Esophagus muscularis mucosa (tissue), 4 donors: ENCODE measurements at regions of chr4 and their contacts with region 1.

Region 1: DNA sequence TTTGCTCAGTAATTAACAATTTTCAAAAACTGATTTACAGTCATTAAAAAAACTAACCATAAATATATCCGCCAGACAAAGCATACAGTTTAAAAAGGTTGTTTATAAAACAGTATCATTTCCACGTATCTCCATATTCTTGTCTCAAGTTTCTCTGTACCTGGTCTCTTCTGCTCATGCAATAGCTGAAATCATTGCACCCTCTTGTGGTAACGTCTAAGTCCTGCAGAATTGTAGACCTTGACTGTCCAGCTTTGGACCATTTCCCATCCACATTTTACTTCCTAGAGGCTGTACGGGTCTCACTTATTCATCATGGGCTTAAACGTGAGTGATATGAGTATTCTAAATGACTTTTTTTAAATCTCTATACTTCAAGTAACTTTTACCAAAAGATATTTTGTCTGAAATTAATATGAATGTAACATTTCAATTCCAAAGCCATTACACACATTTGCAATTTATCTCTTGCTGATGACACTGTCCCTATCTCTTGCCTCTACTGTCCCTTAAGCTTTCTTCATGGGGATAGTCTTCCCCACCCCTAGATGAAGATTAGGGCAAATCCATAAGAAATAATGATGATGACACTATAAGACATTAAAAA is 118.5 kb downstream of the BTC start:
- DNase-seq: no peak
- H3K4me3 ChIP-seq: no peak overlapping the region
- H3K27ac ChIP-seq: no peak overlapping the region
- H3K4me1 ChIP-seq: peaks cover 0 to 7% (median 0%) of the 10 kb centered on the region in 4 donors
- H3K27me3 ChIP-seq: no peaks in the 10 kb centered on the region
- CTCF ChIP-seq: peak; percentile 72 to 84 (median 76)
- EP300 ChIP-seq: no peak
- POLR2A ChIP-seq: no peak

Region 2: GRCh38 chr4:74320559-74321118 is 355.1 kb before region 1 on chr4:
- intact Hi-C with region 1: loop called (anchors 2 kb)
- DNase-seq: no peak
- H3K4me3 ChIP-seq: no peak overlapping the region
- H3K27ac ChIP-seq: no peak overlapping the region
- H3K4me1 ChIP-seq: peaks cover 0 to 8% (median 4%) of the 10 kb centered on the region in 4 donors
- H3K27me3 ChIP-seq: no peaks in the 10 kb centered on the region
- CTCF ChIP-seq: peak; percentile 45 to 54 (median 46)
- EP300 ChIP-seq: no peak
- POLR2A ChIP-seq: no peak

Region 3: DNA sequence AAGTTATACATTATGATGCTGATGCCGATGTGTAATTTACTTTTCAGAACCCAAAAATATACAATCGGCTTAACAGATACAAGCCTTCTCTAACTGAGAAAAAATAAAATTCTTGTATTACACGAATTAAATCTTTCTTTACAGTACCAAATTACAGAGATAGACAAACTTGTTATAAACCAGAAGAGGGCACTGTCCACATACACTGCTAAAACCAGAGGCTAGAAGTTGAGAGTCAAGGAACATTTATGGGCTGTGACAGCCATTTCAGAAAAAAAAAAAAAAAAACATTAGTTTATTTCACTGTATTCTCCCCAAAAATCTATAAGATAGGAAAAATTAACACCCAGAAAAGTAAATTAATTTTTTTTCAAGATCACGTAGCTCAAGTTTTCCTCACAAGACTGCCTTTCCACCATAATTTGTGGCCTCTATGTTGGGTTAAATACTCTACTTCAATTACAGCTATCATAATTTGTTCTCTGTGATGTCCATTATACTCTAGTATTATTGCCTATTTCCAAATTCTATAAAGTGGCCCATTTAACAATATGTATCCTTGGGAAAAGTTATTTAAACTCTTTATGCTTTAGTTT is 298.8 kb before region 1 on chr4:
- intact Hi-C with region 1: loop called (anchors 2 kb)
- DNase-seq: no peak
- H3K4me3 ChIP-seq: no peak overlapping the region
- H3K27ac ChIP-seq: peak overlapping the region in 2 of 4 donors; percentile 38 to 41
- H3K4me1 ChIP-seq: peaks cover 0 to 32% (median 11%) of the 10 kb centered on the region in 4 donors
- H3K27me3 ChIP-seq: no peaks in the 10 kb centered on the region
- CTCF ChIP-seq: peak; percentile 55 to 62 (median 59)
- EP300 ChIP-seq: no peak
- POLR2A ChIP-seq: no peak

Region 4: DNA sequence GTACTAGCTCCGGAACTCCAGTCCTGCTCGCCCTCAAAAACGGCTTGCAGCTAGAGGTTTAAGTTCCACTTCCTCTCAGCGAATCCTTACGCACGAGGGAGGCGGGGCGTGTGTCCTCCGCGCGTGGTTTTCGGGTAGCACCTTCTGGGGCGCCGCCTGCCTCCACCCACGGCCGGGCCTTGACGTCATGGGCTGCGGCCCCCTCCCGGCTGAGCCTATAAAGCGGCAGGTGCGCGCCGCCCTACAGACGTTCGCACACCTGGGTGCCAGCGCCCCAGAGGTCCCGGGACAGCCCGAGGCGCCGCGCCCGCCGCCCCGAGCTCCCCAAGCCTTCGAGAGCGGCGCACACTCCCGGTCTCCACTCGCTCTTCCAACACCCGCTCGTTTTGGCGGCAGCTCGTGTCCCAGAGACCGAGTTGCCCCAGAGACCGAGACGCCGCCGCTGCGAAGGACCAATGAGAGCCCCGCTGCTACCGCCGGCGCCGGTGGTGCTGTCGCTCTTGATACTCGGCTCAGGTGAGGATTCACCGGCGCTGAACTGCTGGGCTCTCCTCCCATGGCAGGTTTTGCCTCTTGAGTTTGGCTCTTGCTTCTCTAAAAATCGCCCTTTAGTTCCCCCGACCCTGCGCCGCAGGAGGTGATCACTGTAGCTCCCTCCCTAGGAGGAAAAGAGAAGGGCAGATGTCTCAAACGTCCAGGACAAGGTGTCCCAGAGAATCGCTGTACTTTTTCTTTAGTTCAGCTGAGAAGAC is 230.7 kb before region 1 on chr4 and contains the start of gene AREG:
- intact Hi-C with region 1: loop called (anchors 5 kb)
- DNase-seq: peak; percentile 94
- H3K4me3 ChIP-seq: peak within 1 kb of the TSS; percentile 66 to 71 (median 70)
- H3K27ac ChIP-seq: peak within 1 kb of the TSS; percentile 85 to 89 (median 88)
- H3K4me1 ChIP-seq: peaks cover 0 to 20% (median 10%) of the 10 kb centered on the region in 4 donors
- H3K27me3 ChIP-seq: no peaks in the 10 kb centered on the region
- CTCF ChIP-seq: peak; percentile 53 to 65 (median 55)
- EP300 ChIP-seq: peak; percentile 67
- POLR2A ChIP-seq: no peak
- total RNA-seq, gene AREG: 1.4 to 18.6 (median 4.4) TPM

Region 5: GRCh38 chr4:74793757-74794340 is 118.1 kb after region 1 on chr4:
- intact Hi-C with region 1: loop called (anchors 5 kb)
- DNase-seq: no peak
- H3K4me3 ChIP-seq: peak overlapping the region; percentile 63 to 83 (median 69)
- H3K27ac ChIP-seq: peak overlapping the region; percentile 85 to 94 (median 90)
- H3K4me1 ChIP-seq: peaks cover 10 to 46% (median 35%) of the 10 kb centered on the region in 4 donors
- H3K27me3 ChIP-seq: no peaks in the 10 kb centered on the region
- CTCF ChIP-seq: peak; percentile 34 to 57 (median 47)
- EP300 ChIP-seq: no peak
- POLR2A ChIP-seq: no peak